Dendritic cell treated with granulocyte-macrophage colony-stimulating factor and Interleukin-4, amounts not matched to agents 40 ng/mL and 50 ng/mL, for 4 days (primary cell): ENCODE measurements at regions of chr7 and their contacts with region 1.

Region 1: DNA sequence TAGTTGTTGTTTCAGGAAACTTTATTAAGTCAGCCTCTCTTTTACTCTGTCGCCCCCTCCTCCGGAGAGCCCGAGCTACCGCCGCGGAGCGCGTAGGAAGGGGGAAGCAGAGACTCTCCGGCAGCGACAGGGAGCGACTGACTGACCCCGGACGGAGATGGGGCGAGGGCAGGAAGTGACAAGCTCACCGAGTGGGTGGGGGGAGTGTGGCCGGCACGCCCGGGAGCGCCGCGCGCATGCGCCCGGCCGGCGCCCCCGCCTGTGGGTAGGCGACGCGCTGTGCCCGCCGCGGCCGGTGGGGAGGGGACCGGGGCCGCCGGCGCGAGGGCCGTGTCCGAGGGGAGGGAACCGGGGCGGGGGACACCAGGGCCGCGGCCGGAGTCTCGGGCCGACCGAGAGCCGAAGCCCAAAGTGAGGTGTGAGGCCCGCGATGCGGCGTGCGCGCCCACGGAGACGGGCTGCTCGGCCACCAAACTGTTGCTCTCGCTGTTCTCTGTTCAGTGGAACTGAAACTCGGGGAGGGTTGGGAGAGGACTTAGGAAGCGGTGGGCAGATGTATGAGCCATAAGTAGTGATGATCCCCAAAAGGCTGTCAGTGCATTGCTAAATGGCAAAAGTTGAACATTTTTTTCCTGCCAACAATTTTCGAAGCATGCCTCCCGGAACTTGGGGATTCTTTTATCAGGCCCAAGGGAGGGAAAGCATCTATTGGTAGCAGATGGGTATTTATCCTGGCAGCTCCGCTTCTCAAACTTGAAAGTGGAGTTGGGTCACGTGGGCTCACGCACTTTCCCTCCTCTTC is at the start of gene ZNF800:
- H3K4me3 Mint-ChIP-seq: peak within 1 kb of the TSS; percentile 91
- H3K27ac Mint-ChIP-seq: peak within 1 kb of the TSS; percentile 98
- H3K4me1 Mint-ChIP-seq: peaks cover 50% of the 10 kb centered on the region
- H3K27me3 Mint-ChIP-seq: peaks cover 7% of the 10 kb centered on the region

Region 2: GRCh38 chr7:127337581-127337980 is 55.2 kb before region 1 on chr7:
- intact Hi-C with region 1: no loop called
- H3K4me3 Mint-ChIP-seq: no peak overlapping the region
- H3K27ac Mint-ChIP-seq: no peak overlapping the region
- H3K4me1 Mint-ChIP-seq: no peaks in the 10 kb centered on the region
- H3K27me3 Mint-ChIP-seq: peaks cover 15% of the 10 kb centered on the region

Region 3: DNA sequence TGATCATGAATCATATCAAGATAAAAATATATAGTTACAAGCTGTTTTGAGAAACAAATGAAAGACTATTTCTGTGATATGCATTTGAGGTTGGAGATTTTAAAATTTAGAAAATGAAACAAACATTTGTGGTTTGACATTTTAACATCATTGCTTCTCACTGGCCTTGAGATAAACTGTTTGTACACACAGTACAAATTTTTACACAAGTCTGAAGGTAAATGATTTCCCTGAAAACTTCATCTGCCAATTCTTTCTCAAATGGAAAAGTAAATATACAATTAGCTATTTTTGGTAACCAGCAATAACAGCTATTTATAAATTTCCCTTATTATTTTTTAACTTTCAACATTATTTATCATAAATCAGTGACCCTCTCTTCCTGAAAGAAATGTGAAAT is 38.9 kb before region 1 on chr7:
- intact Hi-C with region 1: loop called (anchors 2 kb)
- H3K4me3 Mint-ChIP-seq: no peak overlapping the region
- H3K27ac Mint-ChIP-seq: no peak overlapping the region
- H3K4me1 Mint-ChIP-seq: no peaks in the 10 kb centered on the region
- H3K27me3 Mint-ChIP-seq: peaks cover 2% of the 10 kb centered on the region

Region 4: GRCh38 chr7:127585044-127585953 is 192.5 kb after region 1 on chr7 and contains the start of gene GCC1:
- intact Hi-C with region 1: loop called (anchors 2 kb)
- H3K4me3 Mint-ChIP-seq: peak within 1 kb of the TSS; percentile 95
- H3K27ac Mint-ChIP-seq: peak within 1 kb of the TSS; percentile 95
- H3K4me1 Mint-ChIP-seq: peaks cover 58% of the 10 kb centered on the region
- H3K27me3 Mint-ChIP-seq: no peaks in the 10 kb centered on the region

Region 5: GRCh38 chr7:127651556-127652332 is 259.0 kb after region 1 on chr7 and contains the start of gene SND1:
- intact Hi-C with region 1: loop called (anchors 5 kb)
- H3K4me3 Mint-ChIP-seq: peak within 1 kb of the TSS; percentile 95
- H3K27ac Mint-ChIP-seq: peak within 1 kb of the TSS; percentile 95
- H3K4me1 Mint-ChIP-seq: peaks cover 44% of the 10 kb centered on the region
- H3K27me3 Mint-ChIP-seq: no peaks in the 10 kb centered on the region